ENCODE measurements at regions of chr12 and their contacts with region 1.

Region 1: GRCh38 chr12:43812906-43813305 is 6.8 kb upstream of the TWF1 start:
- DNase-seq: no peak
- CTCF ChIP-seq: no peak

Region 2: DNA sequence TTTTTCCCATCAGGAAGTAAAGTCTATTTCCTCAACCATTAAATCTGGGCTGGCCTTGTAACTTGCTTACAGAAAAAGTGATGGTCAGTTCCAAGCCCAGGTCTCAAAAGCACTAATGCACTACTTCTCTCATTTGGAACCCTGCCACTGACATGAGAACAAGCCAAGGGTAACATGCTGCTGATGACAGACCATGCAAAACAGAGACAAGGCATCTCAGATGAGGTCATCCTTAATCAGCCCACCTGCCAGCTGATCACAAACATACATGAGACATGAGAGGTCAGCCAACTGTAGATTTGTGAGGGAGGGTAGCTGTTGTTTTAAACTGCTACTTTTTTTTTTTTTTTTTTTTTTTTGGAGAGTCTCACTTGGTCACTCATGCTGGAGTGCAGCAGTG is 23.0 kb before region 1 on chr12:
- CTCF ChIA-PET with region 1: no interaction called
- POLR2A ChIA-PET with region 1: no interaction called
- DNase-seq: no peak
- CTCF ChIP-seq: no peak

Region 3: GRCh38 chr12:43826681-43827080 is 13.8 kb after region 1 on chr12:
- CTCF ChIA-PET with region 1: interaction called, 13 read pairs
- POLR2A ChIA-PET with region 1: no interaction called
- DNase-seq: no peak
- CTCF ChIP-seq: no peak

Region 4: GRCh38 chr12:43842259-43842658 is 29.4 kb after region 1 on chr12:
- CTCF ChIA-PET with region 1: no interaction called
- POLR2A ChIA-PET with region 1: no interaction called
- DNase-seq: no peak
- CTCF ChIP-seq: no peak

Region 5: GRCh38 chr12:43988838-43989560 is 176.1 kb after region 1 on chr12:
- CTCF ChIA-PET with region 1: no interaction called
- POLR2A ChIA-PET with region 1: no interaction called
- DNase-seq: peak; percentile 16
- CTCF ChIP-seq: no peak